ENCODE measurements at regions of chr15 and their contacts with region 1.

Region 1: DNA sequence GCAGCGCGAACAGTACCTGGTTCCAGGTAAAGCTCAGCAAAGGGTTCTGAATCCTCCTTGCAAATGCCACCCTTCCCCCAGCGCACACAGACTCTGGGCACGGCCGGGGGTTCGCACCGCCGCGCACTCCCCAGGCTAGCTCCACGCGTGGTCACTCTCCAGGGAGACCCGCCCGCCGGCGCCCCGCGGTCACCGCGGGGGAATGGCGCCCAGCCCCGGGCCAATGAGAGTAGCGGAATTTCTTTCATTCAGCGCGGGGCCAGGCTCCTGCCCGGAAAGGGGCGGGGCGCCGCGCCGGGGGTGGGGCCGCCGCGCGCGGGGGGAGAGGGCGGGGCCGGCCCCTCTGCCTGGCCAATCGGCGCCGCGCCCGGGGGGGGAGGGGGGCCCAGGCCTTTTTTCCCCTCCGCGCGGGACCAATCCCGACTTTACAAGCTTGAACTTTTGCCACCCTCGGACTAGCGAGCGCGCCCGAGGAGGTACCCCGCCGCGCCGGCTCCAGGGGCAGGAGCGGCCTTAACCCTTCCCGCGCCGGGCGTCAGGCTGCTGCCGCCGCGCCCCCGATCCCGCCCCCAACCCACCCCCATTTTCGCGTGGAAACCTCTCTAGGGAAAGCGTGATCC is 1.1 kb upstream of the SMAD6 start:
- DNase-seq: peak; percentile 92
- ATAC-seq: peak; percentile 69
- H3K4me3 ChIP-seq: peak overlapping the region; percentile 72 to 87 (median 87)
- H3K27ac ChIP-seq: peak overlapping the region; percentile 91
- H3K4me1 ChIP-seq: peaks cover 40% of the 10 kb centered on the region
- H3K27me3 ChIP-seq: no peaks in the 10 kb centered on the region; a peak in 1 of 5 replicates
- CTCF ChIP-seq: no peak
- EP300 ChIP-seq: no peak
- POLR2A ChIP-seq: peak; percentile 30 to 52; a peak in 3 of 4 replicates
- RAD21 ChIP-seq: no peak

Region 2: DNA sequence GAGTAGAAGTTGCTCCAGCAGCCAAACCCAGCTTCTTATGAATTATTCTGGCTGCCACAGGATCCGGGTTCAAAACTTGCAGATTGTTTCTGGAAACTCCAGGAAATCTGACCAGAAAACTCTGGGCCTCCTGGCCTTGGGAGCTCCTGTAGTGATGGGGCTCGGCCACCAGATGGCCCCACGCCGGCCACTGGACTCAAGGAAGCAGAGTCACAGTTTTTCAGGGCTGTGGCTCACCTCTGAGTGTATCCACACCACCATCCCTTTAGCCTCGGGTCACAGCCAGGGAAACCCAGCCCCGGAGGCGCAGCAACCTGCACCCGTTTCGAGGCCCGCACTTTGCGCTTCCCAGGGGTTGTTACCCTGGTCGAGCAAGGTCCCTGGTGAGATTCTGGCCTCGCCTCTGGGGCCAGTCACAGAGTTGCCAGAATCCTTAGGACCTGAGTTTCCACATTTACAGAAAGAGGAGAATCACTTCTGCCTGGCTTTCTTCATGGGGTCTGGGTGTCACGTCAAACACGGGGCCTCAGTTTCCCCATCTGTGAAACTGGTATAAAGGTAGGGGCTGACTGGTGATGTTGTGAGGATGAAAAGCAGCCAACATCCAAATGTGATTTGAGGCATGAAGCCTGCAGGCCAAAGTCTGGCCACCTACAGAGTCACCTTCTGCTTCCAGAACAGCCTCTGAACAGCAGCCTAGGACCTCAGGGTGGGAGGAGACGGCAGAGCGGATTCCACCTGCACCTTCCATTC is 81.6 kb before region 1 on chr15:
- CTCF ChIA-PET with region 1: interaction called, 13 read pairs
- POLR2A ChIA-PET with region 1: interaction called, 3 read pairs
- in situ Hi-C with region 1: loop called (anchors 5 kb)
- intact Hi-C with region 1: loop called (anchors 1 kb)
- DNase-seq: peak; percentile 52
- ATAC-seq: peak; percentile 84
- H3K4me3 ChIP-seq: no peak overlapping the region
- H3K27ac ChIP-seq: no peak overlapping the region
- H3K4me1 ChIP-seq: peaks cover 38% of the 10 kb centered on the region
- H3K27me3 ChIP-seq: peaks cover 0 to 4% of the 10 kb centered on the region in 2 experiments; a peak in 2 of 5 replicates
- CTCF ChIP-seq: peak; percentile 84
- EP300 ChIP-seq: no peak
- POLR2A ChIP-seq: no peak
- RAD21 ChIP-seq: peak; percentile 83

Region 3: GRCh38 chr15:66654739-66655375 is 46.1 kb before region 1 on chr15:
- CTCF ChIA-PET with region 1: no interaction called
- POLR2A ChIA-PET with region 1: no interaction called
- in situ Hi-C with region 1: no loop called
- intact Hi-C with region 1: no loop called
- DNase-seq: no peak
- ATAC-seq: no peak
- H3K4me3 ChIP-seq: no peak overlapping the region
- H3K27ac ChIP-seq: no peak overlapping the region
- H3K4me1 ChIP-seq: peaks cover 30% of the 10 kb centered on the region
- H3K27me3 ChIP-seq: no peaks in the 10 kb centered on the region
- CTCF ChIP-seq: no peak
- EP300 ChIP-seq: no peak
- POLR2A ChIP-seq: no peak
- RAD21 ChIP-seq: no peak

Region 4: GRCh38 chr15:66679657-66680108 is 21.2 kb before region 1 on chr15:
- CTCF ChIA-PET with region 1: no interaction called
- POLR2A ChIA-PET with region 1: no interaction called
- in situ Hi-C with region 1: no loop called
- intact Hi-C with region 1: loop called (anchors 2 kb)
- DNase-seq: peak; percentile 89
- ATAC-seq: peak; percentile 99
- H3K4me3 ChIP-seq: peak overlapping the region in 1 of 3 experiments; percentile 38; a peak in 2 of 6 replicates
- H3K27ac ChIP-seq: peak overlapping the region; percentile 19
- H3K4me1 ChIP-seq: peaks cover 35% of the 10 kb centered on the region
- H3K27me3 ChIP-seq: no peaks in the 10 kb centered on the region
- CTCF ChIP-seq: peak; percentile 51
- EP300 ChIP-seq: peak in 1 of 2 experiments; percentile 63; a peak in 1 of 4 replicates
- POLR2A ChIP-seq: no peak
- RAD21 ChIP-seq: peak; percentile 41; the same call in 1 of the 2 replicates

Region 5: GRCh38 chr15:66714543-66714981 is 13.7 kb after region 1 on chr15:
- CTCF ChIA-PET with region 1: no interaction called
- POLR2A ChIA-PET with region 1: interaction called, 15 read pairs
- in situ Hi-C with region 1: no loop called
- intact Hi-C with region 1: no loop called
- DNase-seq: no peak
- ATAC-seq: no peak
- H3K4me3 ChIP-seq: no peak overlapping the region
- H3K27ac ChIP-seq: no peak overlapping the region
- H3K4me1 ChIP-seq: peaks cover 20% of the 10 kb centered on the region
- H3K27me3 ChIP-seq: no peaks in the 10 kb centered on the region
- CTCF ChIP-seq: no peak
- EP300 ChIP-seq: no peak
- POLR2A ChIP-seq: no peak
- RAD21 ChIP-seq: no peak

Region 6: DNA sequence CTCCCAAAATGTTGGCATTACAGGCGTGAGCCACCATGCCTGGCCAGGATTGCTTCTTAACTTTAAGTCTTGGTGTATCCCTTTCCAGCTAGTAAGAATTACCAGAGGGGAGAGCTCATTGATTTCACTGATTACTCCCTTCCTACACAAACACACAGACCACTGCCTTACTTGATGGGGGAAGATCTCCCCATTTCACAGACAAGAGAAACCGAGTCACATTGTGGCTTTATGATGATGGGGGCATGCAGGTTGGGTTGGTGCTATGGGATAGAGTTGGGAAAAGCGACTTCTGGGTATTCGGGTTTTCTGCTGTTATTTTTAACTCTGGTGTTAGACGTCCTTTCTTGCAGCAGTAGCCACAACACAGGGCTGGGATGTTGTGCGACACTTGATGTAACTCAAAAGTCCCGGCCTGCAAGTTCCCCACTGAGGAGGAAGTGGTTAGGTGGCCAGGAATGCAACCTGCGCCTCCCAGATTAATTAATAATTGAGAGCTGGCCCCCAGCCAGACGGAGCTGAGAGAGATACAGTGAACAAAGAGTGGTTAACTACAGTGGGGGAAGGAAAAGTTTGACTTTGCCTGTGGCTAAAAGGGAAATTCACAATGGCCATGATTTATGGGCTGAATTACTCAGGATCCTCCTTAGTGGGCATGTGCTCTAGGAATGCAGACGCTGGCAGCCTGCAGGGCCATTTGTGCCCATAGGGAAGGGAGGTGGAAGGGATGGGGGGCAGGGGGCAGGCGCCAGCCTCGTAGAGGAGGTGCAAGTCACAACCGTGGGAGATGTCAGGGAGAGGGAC is 64.8 kb after region 1 on chr15:
- CTCF ChIA-PET with region 1: no interaction called
- POLR2A ChIA-PET with region 1: interaction called, 96 read pairs
- in situ Hi-C with region 1: loop called (anchors 5 kb)
- intact Hi-C with region 1: no loop called
- DNase-seq: peak; percentile 93
- ATAC-seq: peak; percentile 70
- H3K4me3 ChIP-seq: no peak overlapping the region
- H3K27ac ChIP-seq: peak overlapping the region; percentile 60
- H3K4me1 ChIP-seq: peaks cover 96% of the 10 kb centered on the region
- H3K27me3 ChIP-seq: no peaks in the 10 kb centered on the region
- CTCF ChIP-seq: no peak
- EP300 ChIP-seq: peak in 1 of 2 experiments; percentile 63; a peak in 2 of 4 replicates
- POLR2A ChIP-seq: no peak
- RAD21 ChIP-seq: no peak

Region 7: DNA sequence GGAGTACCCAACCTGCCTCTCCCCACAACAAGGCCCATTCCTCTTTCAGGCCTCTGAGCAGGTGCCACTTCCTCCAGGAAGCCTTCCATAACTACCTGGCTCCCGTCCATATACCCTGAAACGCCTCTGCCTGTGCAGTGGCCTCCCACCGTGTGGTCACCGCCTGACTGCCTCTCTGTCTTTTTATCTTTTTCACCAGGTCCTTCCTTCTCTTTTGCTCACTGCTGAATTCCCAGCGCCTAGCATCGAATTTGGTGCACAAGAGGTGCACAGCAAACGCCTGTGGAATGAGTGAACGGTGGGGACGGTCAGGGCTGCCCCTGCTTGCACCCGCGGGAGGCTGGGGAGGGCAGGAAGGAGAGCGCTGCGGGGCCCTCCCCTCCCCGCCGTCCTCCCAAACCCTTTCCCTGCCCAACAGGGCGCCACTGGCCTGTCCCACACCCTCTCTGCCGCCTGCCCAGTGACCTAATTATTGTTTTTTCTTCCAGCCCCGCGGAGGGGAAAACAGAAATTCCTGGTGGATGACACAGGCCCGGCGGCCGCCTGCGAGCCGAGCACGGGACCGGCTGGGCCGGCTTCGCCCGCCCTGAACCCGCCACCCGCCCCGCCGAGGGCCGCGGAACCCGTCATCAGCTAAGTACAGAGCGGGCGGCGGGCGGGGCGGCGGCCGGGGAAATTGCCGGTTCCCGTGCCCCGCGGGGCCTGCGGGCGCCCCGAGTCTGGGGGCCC is 141.2 kb after region 1 on chr15:
- CTCF ChIA-PET with region 1: no interaction called
- POLR2A ChIA-PET with region 1: interaction called, 3 read pairs
- in situ Hi-C with region 1: loop called (anchors 5 kb)
- intact Hi-C with region 1: loop called (anchors 5 kb)
- DNase-seq: peak; percentile 54
- ATAC-seq: peak; percentile 77
- H3K4me3 ChIP-seq: peak overlapping the region; percentile 43 to 70 (median 52)
- H3K27ac ChIP-seq: no peak overlapping the region
- H3K4me1 ChIP-seq: peaks cover 25% of the 10 kb centered on the region
- H3K27me3 ChIP-seq: peaks cover 6 to 47% of the 10 kb centered on the region in 2 experiments
- CTCF ChIP-seq: no peak
- EP300 ChIP-seq: no peak
- POLR2A ChIP-seq: no peak
- RAD21 ChIP-seq: no peak

Region 8: DNA sequence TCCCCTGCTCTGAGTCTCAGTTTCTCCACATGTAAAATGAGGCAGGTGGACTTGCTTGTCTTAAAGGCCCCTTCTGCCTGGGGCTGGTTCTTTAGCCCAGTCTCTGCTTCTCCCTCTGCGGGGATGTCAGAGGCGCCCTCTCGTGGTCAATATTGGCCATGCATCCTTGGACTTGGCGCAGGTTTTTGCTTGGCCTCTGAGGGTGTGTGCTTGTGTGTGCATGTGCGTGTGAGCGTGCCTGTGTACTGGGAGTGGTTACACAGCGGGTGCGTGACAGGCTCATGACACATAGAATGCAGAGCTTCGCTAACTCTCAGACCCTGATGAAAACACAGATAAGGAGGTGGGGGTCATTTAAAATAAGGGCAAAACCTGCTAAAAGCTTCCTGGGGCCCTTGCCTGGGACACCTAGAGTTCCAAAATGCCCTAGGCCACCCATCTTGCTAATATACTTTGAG is 162.0 kb after region 1 on chr15:
- CTCF ChIA-PET with region 1: no interaction called
- POLR2A ChIA-PET with region 1: no interaction called
- in situ Hi-C with region 1: no loop called
- intact Hi-C with region 1: no loop called
- DNase-seq: peak; percentile 60
- ATAC-seq: peak; percentile 95
- H3K4me3 ChIP-seq: no peak overlapping the region
- H3K27ac ChIP-seq: no peak overlapping the region
- H3K4me1 ChIP-seq: no peaks in the 10 kb centered on the region
- H3K27me3 ChIP-seq: peaks cover 2 to 9% of the 10 kb centered on the region in 2 experiments; a peak in 3 of 5 replicates
- CTCF ChIP-seq: peak; percentile 90
- EP300 ChIP-seq: no peak
- POLR2A ChIP-seq: no peak
- RAD21 ChIP-seq: no peak